Activated CD4-positive, alpha-beta T cell treated with anti-CD3 and anti-CD28 coated beads, Interleukin-2, amount 10 ng/mL, durations not matched to agents 24 days and 14 days (primary cell): ENCODE measurements at regions of chr17 and their contacts with region 1.

Region 1: DNA sequence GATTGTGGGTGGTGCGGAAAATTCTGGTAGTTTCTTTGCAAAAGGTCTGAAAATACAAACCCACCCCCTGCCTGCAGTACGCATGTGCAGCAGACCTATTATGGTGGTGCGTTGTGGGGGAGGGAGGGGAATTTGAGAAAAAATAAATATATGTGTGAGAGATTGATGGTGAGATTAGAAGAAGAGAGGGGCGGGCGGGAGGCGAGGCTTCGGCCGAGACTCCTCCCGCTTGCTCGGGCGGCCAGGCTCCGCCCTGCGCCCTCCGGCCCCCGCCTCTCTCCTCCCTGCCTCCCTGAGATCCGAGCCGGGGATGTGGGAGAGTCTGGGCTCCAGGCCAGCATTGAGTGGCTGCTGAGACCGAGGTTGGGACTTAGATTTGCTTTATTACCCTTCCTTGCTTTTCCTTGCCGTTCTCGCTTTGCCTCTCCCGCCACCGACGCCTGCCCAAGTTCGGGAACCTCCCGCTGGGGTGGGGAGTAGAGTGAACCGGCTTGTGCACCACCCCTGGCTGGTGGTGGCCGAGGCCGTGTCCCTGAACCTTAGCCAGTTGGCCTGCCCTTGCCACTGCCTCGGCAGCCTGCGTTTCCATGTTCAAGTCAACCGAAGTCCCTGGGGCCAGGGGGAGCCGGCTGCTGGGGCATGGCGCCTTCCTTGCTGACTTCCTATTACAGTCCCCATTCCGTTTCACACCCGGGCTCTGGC is 956 bp upstream of the CHD3 start:
- DNase-seq: peak; percentile 95
- H3K4me3 Mint-ChIP-seq: no peak overlapping the region
- H3K27ac Mint-ChIP-seq: no peak overlapping the region
- H3K4me1 Mint-ChIP-seq: peaks cover 9% of the 10 kb centered on the region
- H3K27me3 Mint-ChIP-seq: no peaks in the 10 kb centered on the region

Region 2: GRCh38 chr17:7394452-7395191 is 493.0 kb before region 1 on chr17 and contains the start of gene PLSCR3:
- intact Hi-C with region 1: no loop called
- DNase-seq: peak; percentile 97
- H3K4me3 Mint-ChIP-seq: peak within 1 kb of the TSS; percentile 96
- H3K27ac Mint-ChIP-seq: peak within 1 kb of the TSS; percentile 95
- H3K4me1 Mint-ChIP-seq: peaks cover 28% of the 10 kb centered on the region
- H3K27me3 Mint-ChIP-seq: no peaks in the 10 kb centered on the region
- total RNA-seq, gene PLSCR3: 75.5 and 79.8 TPM in 2 replicates

Region 3: GRCh38 chr17:7844292-7845154 is 43.1 kb before region 1 on chr17:
- intact Hi-C with region 1: loop called (anchors 1 kb)
- DNase-seq: peak; percentile 96
- H3K4me3 Mint-ChIP-seq: peak overlapping the region; percentile 99
- H3K27ac Mint-ChIP-seq: peak overlapping the region; percentile 100
- H3K4me1 Mint-ChIP-seq: peaks cover 37% of the 10 kb centered on the region
- H3K27me3 Mint-ChIP-seq: peaks cover 2% of the 10 kb centered on the region

Region 4: DNA sequence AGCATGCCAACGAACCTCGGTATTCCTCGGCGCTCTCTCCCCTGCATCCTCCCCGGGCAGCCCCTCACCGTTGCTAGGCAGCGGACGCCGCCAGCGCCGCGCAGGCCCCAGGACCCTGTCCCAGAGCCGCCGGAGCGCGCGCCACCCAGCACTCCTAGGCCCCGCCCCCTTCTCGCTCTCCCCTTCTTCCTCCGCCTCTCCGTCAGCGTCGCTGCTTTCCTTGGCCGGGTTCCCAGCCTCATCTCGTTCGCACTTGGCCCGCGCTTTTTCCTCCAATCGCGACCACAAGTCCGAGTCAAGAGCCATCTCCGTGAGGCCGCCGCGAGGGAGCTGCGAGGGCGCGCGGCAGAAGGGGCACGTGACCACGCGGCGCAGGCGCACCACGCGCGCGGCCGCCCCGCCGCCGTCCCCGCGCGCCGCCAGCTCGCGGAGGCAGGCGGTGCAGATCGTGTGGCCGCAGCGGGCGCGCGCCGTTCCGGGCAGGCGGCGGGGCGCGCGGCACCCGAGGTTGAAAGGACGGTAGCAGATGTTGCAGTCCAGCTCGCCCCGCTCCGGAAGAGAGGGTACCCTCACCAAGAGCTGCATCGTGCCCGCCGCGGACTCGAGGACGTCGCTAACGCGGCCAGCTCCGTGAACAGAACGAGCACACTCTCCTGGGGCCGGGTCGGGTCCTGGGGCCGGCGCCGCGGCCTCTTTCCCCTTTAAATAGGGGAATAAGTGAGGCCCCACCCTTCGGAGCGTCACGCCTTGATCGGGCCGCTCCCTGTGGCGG is 28.2 kb after region 1 on chr17 and contains the start of gene RNF227:
- intact Hi-C with region 1: loop called (anchors 1 kb)
- DNase-seq: peak; percentile 94
- H3K4me3 Mint-ChIP-seq: peak within 1 kb of the TSS; percentile 97
- H3K27ac Mint-ChIP-seq: peak within 1 kb of the TSS; percentile 97
- H3K4me1 Mint-ChIP-seq: peaks cover 26% of the 10 kb centered on the region
- H3K27me3 Mint-ChIP-seq: no peaks in the 10 kb centered on the region
- total RNA-seq, gene RNF227: 6.2 and 6.5 TPM in 2 replicates